Dorsolateral prefrontal cortex (tissue), 120 donors: ENCODE measurements at regions of chr1 and their contacts with region 1.

Region 1: GRCh38 chr1:70410604-70411359 is at the start of gene CTH:
- DNase-seq: peak; percentile 95 to 99 (median 98)
- H3K4me3 ChIP-seq: peak within 1 kb of the TSS; percentile 55 to 95 (median 83)
- H3K27ac ChIP-seq: peak within 1 kb of the TSS; percentile 52 to 98 (median 94)
- H3K27me3 ChIP-seq: no peaks in the 10 kb centered on the region
- CTCF ChIP-seq: peak in 21 of 56 donors; percentile 6 to 41 (median 22)
- total RNA-seq, gene CTH: 6.0 to 18.7 (median 9.8) TPM

Region 2: DNA sequence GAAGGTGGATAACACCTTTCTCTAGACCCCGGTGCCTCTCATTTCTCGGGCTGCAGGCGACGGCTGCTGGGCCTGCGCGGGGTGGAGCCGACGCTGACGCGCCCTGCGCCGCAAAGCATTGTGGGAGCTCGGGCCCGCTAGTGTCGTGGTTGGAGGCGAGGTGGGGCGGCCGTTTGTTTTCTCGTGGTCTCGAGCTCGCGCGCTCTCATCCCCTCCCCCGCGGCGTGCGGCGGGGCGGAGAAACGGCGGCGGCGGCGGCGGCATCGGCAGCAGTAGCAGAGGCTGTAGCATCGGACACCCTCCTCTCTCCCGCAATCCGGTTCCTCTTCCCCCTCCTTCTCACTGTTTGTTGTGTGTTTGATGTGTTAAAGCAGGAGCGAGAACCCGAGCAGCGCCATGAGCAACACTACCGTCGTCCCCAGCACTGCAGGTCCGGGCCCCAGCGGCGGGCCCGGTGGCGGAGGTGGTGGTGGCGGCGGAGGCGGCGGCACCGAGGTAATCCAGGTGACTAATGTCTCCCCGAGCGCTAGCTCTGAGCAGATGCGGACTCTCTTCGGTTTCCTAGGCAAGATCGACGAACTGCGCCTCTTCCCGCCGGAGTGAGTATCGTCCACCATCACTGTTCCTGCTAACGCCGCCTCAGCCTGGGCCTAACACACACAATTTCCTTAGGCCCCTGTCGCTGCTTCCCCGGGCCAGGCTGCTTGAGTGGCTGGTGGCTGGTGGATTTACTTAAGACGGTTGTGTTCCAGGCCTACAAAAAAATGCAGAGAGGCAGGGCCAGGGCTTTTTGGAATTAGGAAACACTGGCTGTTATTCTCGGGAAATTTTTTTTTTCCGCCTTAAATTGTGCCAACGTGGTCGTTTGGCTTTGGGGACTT is 189.3 kb before region 1 on chr1 and contains the start of gene SRSF11:
- intact Hi-C with region 1: loop called (anchors 1 to 5 kb)
- DNase-seq: peak; percentile 91 to 97 (median 94)
- H3K4me3 ChIP-seq: peak within 1 kb of the TSS; percentile 57 to 93 (median 81)
- H3K27ac ChIP-seq: peak within 1 kb of the TSS; percentile 72 to 98 (median 94)
- H3K27me3 ChIP-seq: no peaks in the 10 kb centered on the region
- CTCF ChIP-seq: peak in 39 of 56 donors; percentile 1 to 60 (median 24)
- total RNA-seq, gene SRSF11: 105 to 267 (median 193) TPM

Region 3: DNA sequence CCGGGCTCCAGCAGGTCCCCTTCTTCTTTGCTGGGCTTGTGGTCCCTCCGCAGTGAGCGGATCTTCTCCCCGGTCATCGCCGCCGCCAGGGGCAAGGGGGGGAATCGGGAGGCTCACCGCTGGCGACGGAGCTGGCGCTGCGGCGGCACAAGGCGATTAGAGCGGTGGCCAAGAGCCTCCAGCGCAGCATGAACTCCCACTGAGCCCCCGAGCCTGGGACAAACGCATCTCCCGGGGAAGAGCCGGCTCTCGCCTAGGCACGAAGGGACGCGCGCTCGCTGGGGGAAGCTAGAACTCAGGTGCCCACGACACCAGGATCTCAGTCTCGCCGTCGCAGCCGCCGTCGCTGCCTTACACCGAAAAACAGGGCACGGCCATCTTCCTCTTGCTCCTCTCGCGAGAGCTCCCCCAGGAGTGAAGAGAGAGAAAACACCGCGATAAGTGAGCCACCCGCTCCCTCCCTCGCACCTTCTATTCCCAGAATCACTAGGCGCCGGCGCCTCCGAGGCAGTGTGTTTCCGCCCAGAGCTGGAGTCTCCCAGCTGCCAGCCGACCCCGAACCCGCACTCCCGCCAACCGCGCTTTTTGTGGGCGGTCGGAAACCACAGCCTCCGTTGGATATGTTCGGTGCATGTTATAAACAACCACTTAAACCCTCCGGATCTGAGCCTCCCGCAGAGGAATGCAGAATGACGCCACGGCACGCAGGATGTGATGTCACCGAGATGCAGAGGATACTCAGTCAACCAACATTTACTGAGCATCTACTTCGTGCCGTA is 56.3 kb before region 1 on chr1 and contains the start of gene ANKRD13C:
- intact Hi-C with region 1: loop called (anchors 2 kb)
- DNase-seq: peak; percentile 76 to 97 (median 92)
- H3K4me3 ChIP-seq: peak within 1 kb of the TSS; percentile 68 to 97 (median 87)
- H3K27ac ChIP-seq: peak within 1 kb of the TSS; percentile 85 to 99 (median 96)
- H3K27me3 ChIP-seq: no peaks in the 10 kb centered on the region
- CTCF ChIP-seq: peak in 37 of 56 donors; percentile 3 to 59 (median 32)
- total RNA-seq, gene ANKRD13C: 25.3 to 47.0 (median 36.2) TPM

Region 4: DNA sequence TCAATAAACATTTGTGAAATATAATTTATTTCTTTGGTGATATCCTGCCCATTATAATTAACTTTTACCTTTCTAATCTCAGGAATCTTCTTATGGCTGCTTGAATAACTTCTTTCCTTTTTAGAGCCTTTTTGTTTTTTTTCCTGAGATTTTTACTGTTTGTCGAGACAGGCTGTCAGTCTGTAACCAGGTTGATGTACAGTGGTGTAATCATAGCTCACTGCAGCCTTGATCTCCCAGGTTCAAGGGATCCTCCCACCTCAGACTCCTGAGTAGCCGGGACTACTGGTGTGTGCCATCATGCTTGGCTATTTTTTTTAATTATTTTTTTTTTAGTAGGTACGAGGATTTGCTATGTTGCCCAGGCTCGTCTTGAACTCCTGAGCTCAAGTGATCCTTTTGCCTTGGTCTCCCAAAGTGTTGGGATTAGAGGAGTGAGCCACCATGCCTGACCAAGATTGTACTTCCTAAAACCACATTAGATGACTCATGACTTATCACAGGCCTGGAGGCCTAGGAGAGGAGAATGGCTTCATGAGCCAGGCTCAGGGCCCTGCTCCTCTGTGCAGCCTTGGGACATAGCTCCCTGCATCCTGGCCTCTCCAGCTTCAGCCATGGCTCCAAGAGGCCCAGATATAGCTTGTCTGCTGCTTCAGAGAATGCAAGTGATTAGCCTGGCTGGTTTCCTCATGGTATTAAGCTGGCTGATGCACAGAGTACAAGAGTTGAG is 48.9 kb after region 1 on chr1:
- intact Hi-C with region 1: loop called in 1 of 2 experiments (anchors 5 kb)
- DNase-seq: no peak
- H3K4me3 ChIP-seq: no peak overlapping the region
- H3K27ac ChIP-seq: no peak overlapping the region
- H3K27me3 ChIP-seq: peaks cover 0 to 33% (median 0%) of the 10 kb centered on the region in 45 donors
- CTCF ChIP-seq: no peak

Region 5: GRCh38 chr1:71054281-71054732 is 643.5 kb after region 1 on chr1:
- intact Hi-C with region 1: no loop called
- DNase-seq: no peak
- H3K4me3 ChIP-seq: no peak overlapping the region
- H3K27ac ChIP-seq: no peak overlapping the region
- H3K27me3 ChIP-seq: peaks cover 0 to 14% (median 0%) of the 10 kb centered on the region in 45 donors
- CTCF ChIP-seq: no peak